ENCODE measurements at regions of chr16 and their contacts with region 1.

Region 1: GRCh38 chr16:67883872-67884261 is 818 bp upstream of the NRN1L start:
- DNase-seq: peak; percentile 76
- ATAC-seq: peak; percentile 81
- H3K4me3 Mint-ChIP-seq: no peak overlapping the region
- H3K27ac Mint-ChIP-seq: no peak overlapping the region
- H3K4me1 Mint-ChIP-seq: no peaks in the 10 kb centered on the region
- H3K27me3 Mint-ChIP-seq: no peaks in the 10 kb centered on the region

Region 2: GRCh38 chr16:67865316-67865715 is 18.6 kb before region 1 on chr16:
- CTCF ChIA-PET with region 1: interaction called, 12 read pairs
- POLR2A ChIA-PET with region 1: no interaction called
- DNase-seq: peak; percentile 36
- ATAC-seq: peak; percentile 67
- H3K4me3 Mint-ChIP-seq: no peak overlapping the region
- H3K27ac Mint-ChIP-seq: no peak overlapping the region
- H3K4me1 Mint-ChIP-seq: peaks cover 2% of the 10 kb centered on the region
- H3K27me3 Mint-ChIP-seq: no peaks in the 10 kb centered on the region

Region 3: DNA sequence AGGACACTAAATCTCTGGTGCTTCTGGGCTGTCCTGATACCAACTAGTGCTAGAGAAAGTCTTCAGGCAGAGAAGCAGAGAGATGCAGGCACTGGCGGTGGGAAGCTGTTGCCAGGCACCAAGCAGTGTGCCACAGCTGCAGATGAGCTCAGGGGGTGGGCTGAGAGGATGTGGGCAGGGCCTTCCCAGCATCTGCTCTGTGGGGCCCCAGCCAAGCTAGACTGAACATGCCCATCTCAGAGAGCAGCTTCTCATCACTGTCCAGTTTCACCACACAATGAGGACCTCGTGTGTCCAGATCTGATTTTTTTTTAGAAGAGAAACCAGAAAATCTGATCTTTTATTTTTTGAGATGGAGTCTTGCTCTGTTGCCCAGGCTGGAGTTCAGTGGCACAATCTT is 26.3 kb after region 1 on chr16:
- CTCF ChIA-PET with region 1: interaction called, 12 read pairs
- POLR2A ChIA-PET with region 1: no interaction called
- DNase-seq: peak; percentile 69
- ATAC-seq: peak; percentile 97
- H3K4me3 Mint-ChIP-seq: no peak overlapping the region
- H3K27ac Mint-ChIP-seq: peak overlapping the region; percentile 64
- H3K4me1 Mint-ChIP-seq: peaks cover 17% of the 10 kb centered on the region
- H3K27me3 Mint-ChIP-seq: no peaks in the 10 kb centered on the region

Region 4: DNA sequence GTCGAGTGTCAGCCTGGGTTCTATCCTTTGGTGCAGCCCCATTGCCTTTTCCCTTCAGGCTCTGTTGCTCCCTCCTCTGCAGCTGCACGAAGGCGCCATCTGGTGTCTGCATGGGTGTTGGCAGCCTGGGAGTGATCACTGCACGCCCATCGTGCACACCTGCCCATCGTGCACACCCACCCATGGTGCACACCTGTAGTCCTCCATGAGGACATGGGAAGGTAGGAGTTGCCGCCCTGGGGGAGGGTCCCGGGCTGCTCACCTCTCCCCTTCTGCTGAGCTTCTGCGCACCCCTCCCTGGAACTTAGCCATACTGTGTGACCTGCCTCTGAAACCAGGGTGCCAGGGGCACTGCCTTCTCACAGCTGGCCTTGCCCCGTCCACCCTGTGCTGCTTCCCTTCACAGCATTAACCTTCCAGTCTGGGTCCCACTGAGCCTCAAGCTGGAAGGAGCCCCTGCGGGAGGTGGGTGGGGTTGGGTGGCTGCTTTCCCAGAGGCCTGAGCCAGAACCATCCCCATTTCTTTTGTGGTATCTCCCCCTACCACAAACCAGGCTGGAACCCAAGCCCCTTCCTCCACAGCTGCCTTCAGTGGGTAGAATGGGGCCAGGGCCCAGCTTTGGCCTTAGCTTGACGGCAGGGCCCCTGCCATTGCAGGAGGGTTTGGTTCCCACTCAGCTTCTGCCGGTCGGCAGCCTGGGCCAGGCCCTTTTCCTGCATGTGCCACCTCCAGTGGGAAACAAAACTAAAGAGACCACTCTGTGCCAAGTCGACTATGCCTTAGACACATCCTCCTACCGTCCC is 44.9 kb after region 1 on chr16:
- CTCF ChIA-PET with region 1: interaction called, 16 read pairs
- POLR2A ChIA-PET with region 1: interaction called, 7 read pairs
- DNase-seq: peak; percentile 87
- ATAC-seq: peak; percentile 86
- H3K4me3 Mint-ChIP-seq: no peak overlapping the region
- H3K27ac Mint-ChIP-seq: no peak overlapping the region
- H3K4me1 Mint-ChIP-seq: peaks cover 2% of the 10 kb centered on the region
- H3K27me3 Mint-ChIP-seq: no peaks in the 10 kb centered on the region

Region 5: DNA sequence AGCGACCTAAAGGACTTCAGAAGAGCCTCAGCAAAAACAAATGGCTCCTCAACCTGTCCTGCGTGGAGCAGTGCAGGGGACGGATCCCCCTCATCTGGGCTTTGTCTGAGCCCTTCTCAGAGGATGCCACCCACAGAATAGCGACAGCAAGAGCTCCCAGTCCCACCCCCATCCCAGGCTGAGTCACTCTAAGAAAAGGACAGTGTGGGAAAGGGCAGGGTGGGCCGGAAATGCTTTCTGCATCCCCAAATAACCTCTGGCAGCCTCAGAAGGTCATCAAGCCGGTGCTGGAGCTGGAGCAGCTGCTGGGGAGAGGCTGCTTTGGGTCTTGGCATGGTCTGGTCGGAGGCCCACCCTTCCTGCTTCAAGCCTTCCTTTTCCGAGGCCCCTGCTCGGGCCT is 75.7 kb after region 1 on chr16:
- CTCF ChIA-PET with region 1: no interaction called
- POLR2A ChIA-PET with region 1: no interaction called
- DNase-seq: no peak
- ATAC-seq: no peak
- H3K4me3 Mint-ChIP-seq: no peak overlapping the region
- H3K27ac Mint-ChIP-seq: no peak overlapping the region
- H3K4me1 Mint-ChIP-seq: no peaks in the 10 kb centered on the region
- H3K27me3 Mint-ChIP-seq: no peaks in the 10 kb centered on the region